Activated CD8-positive, alpha-beta memory T cell treated with anti-CD3 and anti-CD28 coated beads, Interleukin-2, amount 10 ng/mL, durations not matched to agents 7 days and 5 days (primary cell): ENCODE measurements at regions of chr9 and their contacts with region 1.

Region 1: DNA sequence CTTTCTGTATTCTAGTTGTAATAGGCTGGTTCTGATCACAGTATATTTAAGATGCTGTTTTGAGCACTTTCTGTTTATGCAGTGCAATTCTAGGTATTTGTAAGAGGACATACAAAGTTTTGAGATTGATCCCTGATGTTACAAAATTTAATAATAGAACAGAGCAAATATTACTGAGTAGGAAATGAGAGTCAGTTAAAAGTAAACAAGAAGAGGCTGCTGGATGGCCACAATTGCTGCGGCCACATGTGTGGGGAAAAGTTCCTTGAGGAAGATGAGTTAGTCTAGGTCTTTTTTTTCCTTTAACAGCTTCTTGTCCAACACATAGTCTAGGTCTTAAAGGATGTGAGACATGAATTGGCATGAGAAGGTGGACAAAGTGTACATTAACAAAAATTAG is 11.3 kb downstream of the EHMT1 start:
- DNase-seq: no peak
- ATAC-seq: no peak
- H3K4me3 Mint-ChIP-seq: no peak overlapping the region
- H3K27ac Mint-ChIP-seq: peak overlapping the region; percentile 33
- H3K4me1 Mint-ChIP-seq: peaks cover 51% of the 10 kb centered on the region
- H3K27me3 Mint-ChIP-seq: no peaks in the 10 kb centered on the region

Region 2: GRCh38 chr9:137618105-137619067 is 11.7 kb before region 1 on chr9 and contains the start of gene EHMT1:
- CTCF ChIA-PET with region 1: interaction called, 15 read pairs
- DNase-seq: peak; percentile 91
- ATAC-seq: peak; percentile 88
- H3K4me3 Mint-ChIP-seq: peak within 1 kb of the TSS; percentile 84
- H3K27ac Mint-ChIP-seq: peak within 1 kb of the TSS; percentile 89
- H3K4me1 Mint-ChIP-seq: peaks cover 40% of the 10 kb centered on the region
- H3K27me3 Mint-ChIP-seq: no peaks in the 10 kb centered on the region
- total RNA-seq, gene EHMT1: 99.9 to 130 TPM